ENCODE measurements at regions of chrX and their contacts with region 1.

Region 1: GRCh38 chrX:68828740-68829552 is at the start of gene EFNB1:
- DNase-seq: peak; percentile 89
- H3K4me3 Mint-ChIP-seq: peak within 1 kb of the TSS; percentile 80
- H3K27ac Mint-ChIP-seq: peak within 1 kb of the TSS; percentile 65
- H3K4me1 Mint-ChIP-seq: peaks cover 18% of the 10 kb centered on the region
- H3K27me3 Mint-ChIP-seq: no peaks in the 10 kb centered on the region
- total RNA-seq, gene EFNB1: 4.6 to 4.8 TPM

Region 2: DNA sequence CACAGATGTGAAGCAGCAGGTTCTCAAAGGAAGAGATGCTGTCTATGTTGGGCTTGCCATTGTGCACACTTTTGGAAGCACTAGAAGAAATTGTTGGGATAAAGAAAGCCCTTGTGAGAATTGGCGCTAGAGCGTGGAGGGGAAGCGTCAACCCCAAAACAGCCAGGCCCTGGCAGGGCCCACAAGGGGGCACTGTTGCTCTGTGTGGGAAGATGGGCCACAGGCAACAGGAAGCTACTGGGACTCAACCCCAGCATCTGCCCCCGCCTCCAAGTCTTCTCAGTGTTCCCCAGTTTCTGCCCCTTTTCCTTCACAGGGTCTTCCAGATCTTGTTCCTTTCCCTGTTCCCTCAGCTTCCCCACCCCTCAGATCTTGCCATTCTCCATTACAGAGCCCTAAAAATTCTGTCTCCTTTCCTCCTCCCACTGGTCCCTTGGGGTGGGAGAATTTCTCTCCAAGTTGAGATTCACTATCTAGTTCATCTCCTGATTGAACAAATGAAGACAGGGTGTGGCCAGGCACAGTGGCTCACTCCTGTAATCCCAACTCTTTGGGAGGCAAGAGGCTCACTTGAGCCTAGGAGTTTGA is 95.9 kb before region 1 on chrX:
- CTCF ChIA-PET with region 1: interaction called, 8 read pairs
- POLR2A ChIA-PET with region 1: no interaction called
- intact Hi-C with region 1: loop called (anchors 5 kb)
- DNase-seq: peak; percentile 77
- H3K4me3 Mint-ChIP-seq: no peak overlapping the region
- H3K27ac Mint-ChIP-seq: no peak overlapping the region
- H3K4me1 Mint-ChIP-seq: peaks cover 2% of the 10 kb centered on the region
- H3K27me3 Mint-ChIP-seq: peaks cover 4% of the 10 kb centered on the region

Region 3: GRCh38 chrX:69222103-69223090 is 393.5 kb after region 1 on chrX:
- CTCF ChIA-PET with region 1: interaction called, 58 read pairs
- POLR2A ChIA-PET with region 1: no interaction called
- intact Hi-C with region 1: loop called (anchors 1 kb)
- DNase-seq: peak; percentile 78
- H3K4me3 Mint-ChIP-seq: no peak overlapping the region
- H3K27ac Mint-ChIP-seq: no peak overlapping the region
- H3K4me1 Mint-ChIP-seq: peaks cover 2% of the 10 kb centered on the region
- H3K27me3 Mint-ChIP-seq: no peaks in the 10 kb centered on the region

Region 4: GRCh38 chrX:69387567-69388487 is 558.9 kb after region 1 on chrX:
- CTCF ChIA-PET with region 1: interaction called, 12 read pairs
- POLR2A ChIA-PET with region 1: no interaction called
- intact Hi-C with region 1: loop called (anchors 10 kb)
- DNase-seq: peak; percentile 35
- H3K4me3 Mint-ChIP-seq: no peak overlapping the region
- H3K27ac Mint-ChIP-seq: no peak overlapping the region
- H3K4me1 Mint-ChIP-seq: no peaks in the 10 kb centered on the region
- H3K27me3 Mint-ChIP-seq: no peaks in the 10 kb centered on the region

Region 5: DNA sequence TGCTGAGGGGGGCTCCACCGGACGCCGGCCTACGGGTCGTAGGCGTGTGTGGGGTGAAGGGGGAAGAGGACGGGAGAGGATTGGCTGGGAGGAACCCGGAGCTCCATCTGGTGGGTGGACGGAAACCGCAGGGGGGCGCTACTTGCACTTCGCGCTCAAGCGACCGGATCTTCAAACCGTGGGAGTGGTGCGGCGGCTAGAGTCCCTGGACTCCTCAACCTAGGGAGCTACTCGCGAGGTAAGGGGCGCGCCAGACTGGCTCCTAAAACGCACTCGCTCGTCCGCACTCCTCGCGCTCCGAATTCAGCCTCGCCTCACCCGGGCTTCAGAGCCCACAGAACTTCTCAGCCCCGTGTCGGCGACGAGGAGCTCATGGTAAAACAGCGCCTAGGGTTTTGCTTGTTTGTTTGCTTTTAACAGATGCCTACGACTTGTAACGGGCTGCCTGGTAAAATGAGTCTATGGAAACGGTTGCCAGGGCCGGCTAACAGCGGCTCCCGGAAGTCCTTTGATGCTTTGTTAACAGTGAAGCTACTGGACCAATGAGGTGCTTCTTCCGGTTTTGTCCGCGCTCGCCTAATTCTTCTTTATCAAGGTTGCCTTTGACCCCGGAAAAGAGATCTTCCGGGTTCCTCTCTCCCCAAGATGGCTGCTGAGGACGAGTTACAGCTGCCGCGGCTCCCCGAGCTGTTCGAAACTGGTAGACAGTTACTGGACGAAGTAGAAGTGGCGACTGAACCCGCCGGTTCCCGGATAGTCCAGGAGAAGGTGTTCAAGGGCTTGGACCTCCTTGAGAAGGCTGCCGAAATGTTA is 1304.6 kb after region 1 on chrX and contains the start of gene IGBP1:
- CTCF ChIA-PET with region 1: interaction called, 3 read pairs
- POLR2A ChIA-PET with region 1: no interaction called
- intact Hi-C with region 1: loop called (anchors 5 kb)
- DNase-seq: peak; percentile 85
- H3K4me3 Mint-ChIP-seq: peak within 1 kb of the TSS; percentile 98
- H3K27ac Mint-ChIP-seq: peak within 1 kb of the TSS; percentile 96
- H3K4me1 Mint-ChIP-seq: peaks cover 24% of the 10 kb centered on the region
- H3K27me3 Mint-ChIP-seq: no peaks in the 10 kb centered on the region
- total RNA-seq, gene IGBP1: 50.8 to 51.5 TPM

Measured in activated CD4-positive, alpha-beta memory T cell treated with anti-CD3 and anti-CD28 coated beads for 36 hours (primary cell).